CD4-positive, alpha-beta memory T cell (primary cell): ENCODE measurements at regions of chr16 and their contacts with region 1.

Region 1: GRCh38 chr16:67993189-67994039 is 5.9 kb downstream of the DPEP2 start:
- DNase-seq: peak; percentile 81 to 83 (median 81)
- H3K4me3 ChIP-seq: peak overlapping the region; percentile 17 to 70
- H3K4me3 Mint-ChIP-seq: peak overlapping the region; percentile 85 to 92 (median 88)
- H3K27ac ChIP-seq: peak overlapping the region; percentile 73
- H3K27ac Mint-ChIP-seq: peak overlapping the region; percentile 95 to 98 (median 96)
- H3K4me1 ChIP-seq: peaks cover 45% of the 10 kb centered on the region
- H3K4me1 Mint-ChIP-seq: peaks cover 16 to 53% (median 35%) of the 10 kb centered on the region in 4 donors
- H3K27me3 ChIP-seq: no peaks in the 10 kb centered on the region
- H3K27me3 Mint-ChIP-seq: no peaks in the 10 kb centered on the region

Region 2: DNA sequence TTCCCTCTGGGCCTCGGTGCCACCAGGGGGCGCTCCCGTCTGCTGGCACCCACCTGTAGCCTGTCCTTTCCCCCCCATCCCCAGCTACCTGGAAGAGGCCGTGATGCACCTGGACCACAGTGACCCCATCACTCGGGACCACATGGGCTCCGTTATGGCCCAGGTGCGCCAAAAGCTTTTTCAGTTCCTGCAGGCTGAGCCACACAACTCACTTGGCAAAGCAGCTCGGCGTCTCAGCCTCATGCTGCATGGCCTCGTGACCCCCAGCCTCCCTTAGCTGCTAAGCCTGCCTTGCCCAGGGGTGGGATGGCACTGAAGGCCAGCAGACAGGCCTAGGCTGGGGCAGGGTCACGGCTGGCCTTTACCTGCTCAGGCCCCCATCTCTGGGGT is 109.5 kb before region 1 on chr16:
- CTCF ChIA-PET with region 1: interaction called, 3 read pairs
- POLR2A ChIA-PET with region 1: no interaction called
- intact Hi-C with region 1: loop called (anchors 2 kb)
- DNase-seq: peak; percentile 68 to 75 (median 71)
- H3K4me3 ChIP-seq: no peak overlapping the region
- H3K4me3 Mint-ChIP-seq: no peak overlapping the region
- H3K27ac ChIP-seq: no peak overlapping the region
- H3K27ac Mint-ChIP-seq: peak overlapping the region in 4 of 7 donors; percentile 22 to 83 (median 40)
- H3K4me1 ChIP-seq: no peaks in the 10 kb centered on the region
- H3K4me1 Mint-ChIP-seq: peaks cover 0 to 1% (median 0%) of the 10 kb centered on the region in 4 donors
- H3K27me3 ChIP-seq: no peaks in the 10 kb centered on the region
- H3K27me3 Mint-ChIP-seq: no peaks in the 10 kb centered on the region

Region 3: DNA sequence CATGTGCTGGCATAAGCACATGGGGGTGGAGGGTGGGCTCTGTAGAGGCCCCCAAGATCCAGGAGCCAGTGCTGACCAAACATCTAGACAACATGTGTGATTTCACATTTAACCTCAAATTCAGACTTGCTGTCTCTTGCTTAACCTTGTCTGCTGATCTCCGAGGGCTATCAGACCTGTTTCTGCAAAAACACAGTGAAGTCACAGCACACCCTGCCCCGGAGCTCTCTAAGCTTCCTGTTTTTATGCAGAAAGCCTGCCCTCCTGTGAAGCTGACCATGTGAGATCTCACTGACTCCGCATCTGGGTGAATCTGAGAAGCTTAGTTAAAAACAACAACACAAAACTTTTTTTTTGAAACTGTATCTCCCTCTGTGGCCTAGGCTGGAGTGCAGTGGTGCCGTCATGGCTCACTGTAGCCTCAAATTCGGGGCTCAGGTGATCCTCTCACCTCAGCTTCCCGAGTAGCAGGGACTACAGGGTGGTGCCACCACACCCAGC is 12.4 kb after region 1 on chr16:
- CTCF ChIA-PET with region 1: interaction called, 45 read pairs
- POLR2A ChIA-PET with region 1: interaction called, 35 read pairs
- intact Hi-C with region 1: loop called (anchors 1 kb)
- DNase-seq: peak; percentile 61 to 77 (median 67)
- H3K4me3 ChIP-seq: no peak overlapping the region
- H3K4me3 Mint-ChIP-seq: peak overlapping the region in 7 of 8 donors; percentile 46 to 76 (median 60)
- H3K27ac ChIP-seq: peak overlapping the region; percentile 29
- H3K27ac Mint-ChIP-seq: peak overlapping the region; percentile 81 to 97 (median 95)
- H3K4me1 ChIP-seq: peaks cover 56% of the 10 kb centered on the region
- H3K4me1 Mint-ChIP-seq: peaks cover 22 to 53% (median 37%) of the 10 kb centered on the region in 4 donors
- H3K27me3 ChIP-seq: no peaks in the 10 kb centered on the region
- H3K27me3 Mint-ChIP-seq: no peaks in the 10 kb centered on the region

Region 4: DNA sequence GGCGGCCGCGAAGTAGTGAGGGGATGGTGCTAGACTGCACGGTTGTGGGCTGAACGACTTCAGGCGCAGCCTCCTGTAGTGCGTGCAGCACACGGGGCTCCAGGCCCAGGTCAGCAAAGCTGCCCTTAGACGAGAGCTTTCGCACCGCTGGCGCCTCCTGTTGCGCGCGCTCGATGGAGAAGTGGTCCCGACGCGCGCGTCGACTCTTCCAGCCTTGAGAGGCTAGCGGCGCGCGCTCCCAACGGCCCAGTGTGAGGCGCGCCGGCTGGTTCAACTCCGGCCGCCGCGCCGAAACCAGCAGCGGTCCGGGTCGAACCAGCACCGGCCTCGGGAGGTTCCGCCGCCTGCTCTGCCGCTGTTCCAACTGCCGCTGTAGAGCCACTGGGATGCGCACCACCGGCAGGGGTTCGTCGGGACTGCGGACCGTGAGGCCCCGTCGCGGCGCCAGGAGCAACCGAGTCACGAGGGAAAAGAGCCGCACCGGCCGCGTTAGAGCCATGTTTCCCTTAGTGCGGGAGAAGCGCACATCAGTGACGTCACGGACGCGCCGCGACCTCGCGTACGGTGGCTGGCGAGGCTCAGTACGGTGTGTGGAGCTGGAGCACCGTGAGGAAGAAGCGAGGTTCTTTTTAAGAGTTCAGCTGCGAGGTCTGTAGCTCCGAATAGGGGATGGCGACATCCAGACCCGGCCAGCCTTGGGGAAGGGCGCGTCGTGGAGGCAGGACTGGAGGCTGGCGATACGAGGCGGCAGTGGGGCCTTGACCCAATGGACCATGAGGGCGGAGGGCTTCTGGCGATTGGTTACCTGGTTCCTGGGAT is 29.5 kb after region 1 on chr16 and contains the starts of genes DDX28 and DUS2:
- CTCF ChIA-PET with region 1: interaction called, 45 read pairs
- POLR2A ChIA-PET with region 1: interaction called, 95 read pairs
- intact Hi-C with region 1: loop called (anchors 1 kb)
- DNase-seq: peak; percentile 92 to 95 (median 92)
- H3K4me3 ChIP-seq: peak within 1 kb of the TSS; percentile 57 to 87
- H3K4me3 Mint-ChIP-seq: peak within 1 kb of the TSS; percentile 93 to 100 (median 97)
- H3K27ac ChIP-seq: peak within 1 kb of the TSS; percentile 84
- H3K27ac Mint-ChIP-seq: peak within 1 kb of the TSS; percentile 91 to 100 (median 99)
- H3K4me1 ChIP-seq: peaks cover 30% of the 10 kb centered on the region
- H3K4me1 Mint-ChIP-seq: peaks cover 10 to 37% (median 28%) of the 10 kb centered on the region in 4 donors
- H3K27me3 ChIP-seq: no peaks in the 10 kb centered on the region
- H3K27me3 Mint-ChIP-seq: peaks cover 1 to 2% of the 10 kb centered on the region in 2 donors
- total RNA-seq, gene DDX28: 16.1 to 17.0 TPM
- total RNA-seq, gene DUS2: 13.8 to 14.6 TPM

Region 5: DNA sequence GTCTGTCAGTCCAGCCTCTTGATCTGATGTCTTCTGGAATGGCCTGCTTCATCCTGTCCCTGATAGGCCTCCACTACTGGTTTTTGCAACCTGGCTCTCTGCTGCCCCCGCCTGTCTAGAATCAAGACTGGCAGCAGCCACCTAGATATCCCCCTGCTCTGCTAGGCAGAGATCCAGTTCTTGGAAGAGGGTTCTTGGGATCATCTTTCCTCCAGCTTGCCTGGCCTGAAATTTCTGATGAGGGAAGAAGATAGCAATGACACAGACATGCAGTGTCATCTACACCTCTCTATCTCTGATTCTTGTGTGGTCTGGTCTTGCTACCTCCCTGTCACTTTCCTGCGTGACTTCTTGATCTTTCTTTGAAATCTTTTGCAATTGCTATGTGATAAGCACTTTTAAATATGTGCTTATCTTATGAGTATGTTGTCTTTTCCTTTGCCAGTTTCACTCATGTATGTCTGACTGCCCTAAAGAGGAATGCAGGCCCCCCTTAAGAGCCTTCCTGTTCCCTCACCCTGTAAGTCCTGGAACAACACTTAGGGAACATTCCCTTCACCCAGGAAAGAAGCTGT is 71.5 kb after region 1 on chr16:
- CTCF ChIA-PET with region 1: interaction called, 11 read pairs
- POLR2A ChIA-PET with region 1: interaction called, 8 read pairs
- intact Hi-C with region 1: loop called (anchors 1 kb)
- DNase-seq: peak; percentile 60 to 78 (median 68)
- H3K4me3 ChIP-seq: no peak overlapping the region
- H3K4me3 Mint-ChIP-seq: peak overlapping the region in 6 of 8 donors; percentile 1 to 74 (median 34)
- H3K27ac ChIP-seq: peak overlapping the region; percentile 42
- H3K27ac Mint-ChIP-seq: peak overlapping the region; percentile 79 to 96 (median 84)
- H3K4me1 ChIP-seq: peaks cover 79% of the 10 kb centered on the region
- H3K4me1 Mint-ChIP-seq: peaks cover 51 to 90% (median 71%) of the 10 kb centered on the region in 4 donors
- H3K27me3 ChIP-seq: no peaks in the 10 kb centered on the region
- H3K27me3 Mint-ChIP-seq: no peaks in the 10 kb centered on the region

Region 6: GRCh38 chr16:68074850-68075555 is 81.6 kb after region 1 on chr16:
- CTCF ChIA-PET with region 1: interaction called, 3 read pairs
- POLR2A ChIA-PET with region 1: interaction called, 13 read pairs
- intact Hi-C with region 1: no loop called
- DNase-seq: peak; percentile 63 to 82 (median 71)
- H3K4me3 ChIP-seq: peak overlapping the region in 1 of 2 donors; percentile 1
- H3K4me3 Mint-ChIP-seq: peak overlapping the region; percentile 26 to 89 (median 84)
- H3K27ac ChIP-seq: peak overlapping the region; percentile 40
- H3K27ac Mint-ChIP-seq: peak overlapping the region; percentile 66 to 95 (median 91)
- H3K4me1 ChIP-seq: peaks cover 94% of the 10 kb centered on the region
- H3K4me1 Mint-ChIP-seq: peaks cover 70 to 92% (median 84%) of the 10 kb centered on the region in 4 donors
- H3K27me3 ChIP-seq: no peaks in the 10 kb centered on the region
- H3K27me3 Mint-ChIP-seq: no peaks in the 10 kb centered on the region

Region 7: GRCh38 chr16:68179196-68179795 is 185.9 kb after region 1 on chr16:
- CTCF ChIA-PET with region 1: no interaction called
- POLR2A ChIA-PET with region 1: no interaction called
- intact Hi-C with region 1: no loop called
- DNase-seq: no peak
- H3K4me3 ChIP-seq: no peak overlapping the region
- H3K4me3 Mint-ChIP-seq: no peak overlapping the region
- H3K27ac ChIP-seq: no peak overlapping the region
- H3K27ac Mint-ChIP-seq: peak overlapping the region in 2 of 7 donors; percentile 1 to 57
- H3K4me1 ChIP-seq: no peaks in the 10 kb centered on the region
- H3K4me1 Mint-ChIP-seq: peaks cover 3 to 23% (median 15%) of the 10 kb centered on the region in 4 donors
- H3K27me3 ChIP-seq: no peaks in the 10 kb centered on the region
- H3K27me3 Mint-ChIP-seq: no peaks in the 10 kb centered on the region

Region 8: GRCh38 chr16:68229431-68230198 is 236.2 kb after region 1 on chr16:
- CTCF ChIA-PET with region 1: interaction called, 6 read pairs
- POLR2A ChIA-PET with region 1: no interaction called
- intact Hi-C with region 1: loop called (anchors 1 kb)
- DNase-seq: peak in 4 of 5 donors; percentile 44 to 55 (median 52)
- H3K4me3 ChIP-seq: no peak overlapping the region
- H3K4me3 Mint-ChIP-seq: peak overlapping the region in 1 of 8 donors; percentile 31
- H3K27ac ChIP-seq: no peak overlapping the region
- H3K27ac Mint-ChIP-seq: peak overlapping the region in 6 of 7 donors; percentile 10 to 89 (median 51)
- H3K4me1 ChIP-seq: peaks cover 23% of the 10 kb centered on the region
- H3K4me1 Mint-ChIP-seq: peaks cover 21 to 51% (median 34%) of the 10 kb centered on the region in 4 donors
- H3K27me3 ChIP-seq: no peaks in the 10 kb centered on the region
- H3K27me3 Mint-ChIP-seq: no peaks in the 10 kb centered on the region